ENCODE measurements at regions of chr21 and their contacts with region 1.

Region 1: DNA sequence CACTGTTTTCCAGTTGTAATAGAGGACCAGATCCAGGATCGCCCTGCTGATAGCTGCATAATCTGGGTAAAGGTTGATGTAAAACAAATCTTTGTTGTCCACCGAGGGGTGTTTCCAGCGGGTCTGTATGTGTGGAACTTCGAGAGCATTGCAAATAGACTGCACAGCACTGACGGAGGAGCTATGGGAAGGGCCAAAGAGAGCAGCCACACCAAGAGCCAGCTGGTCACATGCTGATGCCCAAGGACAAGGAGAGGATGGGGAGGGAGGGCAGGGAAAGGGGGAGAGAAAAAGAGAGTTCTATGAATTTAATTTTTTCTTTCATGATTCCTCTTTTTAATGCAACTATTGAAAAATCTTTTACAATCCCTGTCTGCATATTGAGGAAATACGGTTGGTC is 250.0 kb downstream of the GRIK1 start:
- DNase-seq: no peak
- H3K4me3 ChIP-seq: no peak overlapping the region
- H3K4me3 Mint-ChIP-seq: no peak overlapping the region
- H3K27ac Mint-ChIP-seq: no peak overlapping the region
- H3K4me1 ChIP-seq: no peaks in the 10 kb centered on the region
- H3K4me1 Mint-ChIP-seq: no peaks in the 10 kb centered on the region
- H3K27me3 ChIP-seq: no peaks in the 10 kb centered on the region; the same call in 1 of the 2 replicates
- H3K27me3 Mint-ChIP-seq: peaks cover 11% of the 10 kb centered on the region
- CTCF ChIP-seq: no peak

Region 2: GRCh38 chr21:29477941-29478340 is 211.8 kb before region 1 on chr21:
- CTCF ChIA-PET with region 1: no interaction called
- POLR2A ChIA-PET with region 1: no interaction called
- intact Hi-C with region 1: loop called (anchors 5 kb)
- DNase-seq: no peak
- H3K4me3 ChIP-seq: no peak overlapping the region
- H3K4me3 Mint-ChIP-seq: no peak overlapping the region
- H3K27ac Mint-ChIP-seq: no peak overlapping the region
- H3K4me1 ChIP-seq: no peaks in the 10 kb centered on the region
- H3K4me1 Mint-ChIP-seq: no peaks in the 10 kb centered on the region
- H3K27me3 ChIP-seq: no peaks in the 10 kb centered on the region
- H3K27me3 Mint-ChIP-seq: no peaks in the 10 kb centered on the region
- CTCF ChIP-seq: no peak

Region 3: GRCh38 chr21:29939104-29939923 is 249.6 kb after region 1 on chr21:
- CTCF ChIA-PET with region 1: no interaction called
- POLR2A ChIA-PET with region 1: no interaction called
- intact Hi-C with region 1: no loop called
- DNase-seq: no peak
- H3K4me3 ChIP-seq: no peak overlapping the region
- H3K4me3 Mint-ChIP-seq: no peak overlapping the region
- H3K27ac Mint-ChIP-seq: no peak overlapping the region
- H3K4me1 ChIP-seq: no peaks in the 10 kb centered on the region
- H3K4me1 Mint-ChIP-seq: no peaks in the 10 kb centered on the region
- H3K27me3 ChIP-seq: no peaks in the 10 kb centered on the region
- H3K27me3 Mint-ChIP-seq: peaks cover 17% of the 10 kb centered on the region
- CTCF ChIP-seq: no peak

Measured in Caco-2 (cell line).